ENCODE measurements at regions of chr4 and their contacts with region 1.

Region 1: GRCh38 chr4:112099701-112100297 is 45.5 kb upstream of the FAM241A start:
- DNase-seq: peak in 2 of 9 experiments; percentile 54 to 65
- ATAC-seq: peak; percentile 75
- H3K4me3 ChIP-seq: no peak overlapping the region
- H3K4me3 Mint-ChIP-seq: no peak overlapping the region
- H3K27ac ChIP-seq: no peak overlapping the region
- H3K27ac Mint-ChIP-seq: no peak overlapping the region
- H3K4me1 ChIP-seq: no peaks in the 10 kb centered on the region
- H3K4me1 Mint-ChIP-seq: no peaks in the 10 kb centered on the region
- H3K27me3 ChIP-seq: no peaks in the 10 kb centered on the region
- H3K27me3 Mint-ChIP-seq: peaks cover 2% of the 10 kb centered on the region
- CTCF ChIP-seq: peak; percentile 76

Region 2: DNA sequence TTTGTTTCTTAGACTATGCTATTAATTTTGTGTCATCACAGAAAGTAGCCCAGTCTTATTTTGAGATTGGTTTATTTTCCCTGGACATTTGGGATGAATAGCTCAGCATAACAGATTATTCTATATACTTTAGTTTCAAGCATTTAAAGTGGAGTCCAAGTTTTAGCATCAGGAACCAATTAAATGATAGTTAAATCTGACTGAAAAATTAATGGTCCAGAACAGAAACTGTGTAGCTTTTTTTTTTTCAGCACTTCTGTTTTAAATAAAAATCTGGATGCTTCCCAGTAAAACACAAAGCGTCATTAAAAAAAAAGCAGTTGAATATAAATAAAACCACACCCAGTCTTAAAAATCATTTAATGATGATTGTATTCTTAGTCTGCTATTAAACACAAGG is 1417.5 kb before region 1 on chr4:
- CTCF ChIA-PET with region 1: no interaction called
- POLR2A ChIA-PET with region 1: no interaction called
- intact Hi-C with region 1: no loop called
- DNase-seq: no peak
- ATAC-seq: no peak
- H3K4me3 ChIP-seq: no peak overlapping the region
- H3K4me3 Mint-ChIP-seq: no peak overlapping the region
- H3K27ac ChIP-seq: no peak overlapping the region
- H3K27ac Mint-ChIP-seq: no peak overlapping the region
- H3K4me1 ChIP-seq: no peaks in the 10 kb centered on the region
- H3K4me1 Mint-ChIP-seq: no peaks in the 10 kb centered on the region
- H3K27me3 ChIP-seq: no peaks in the 10 kb centered on the region
- H3K27me3 Mint-ChIP-seq: no peaks in the 10 kb centered on the region
- CTCF ChIP-seq: no peak

Region 3: DNA sequence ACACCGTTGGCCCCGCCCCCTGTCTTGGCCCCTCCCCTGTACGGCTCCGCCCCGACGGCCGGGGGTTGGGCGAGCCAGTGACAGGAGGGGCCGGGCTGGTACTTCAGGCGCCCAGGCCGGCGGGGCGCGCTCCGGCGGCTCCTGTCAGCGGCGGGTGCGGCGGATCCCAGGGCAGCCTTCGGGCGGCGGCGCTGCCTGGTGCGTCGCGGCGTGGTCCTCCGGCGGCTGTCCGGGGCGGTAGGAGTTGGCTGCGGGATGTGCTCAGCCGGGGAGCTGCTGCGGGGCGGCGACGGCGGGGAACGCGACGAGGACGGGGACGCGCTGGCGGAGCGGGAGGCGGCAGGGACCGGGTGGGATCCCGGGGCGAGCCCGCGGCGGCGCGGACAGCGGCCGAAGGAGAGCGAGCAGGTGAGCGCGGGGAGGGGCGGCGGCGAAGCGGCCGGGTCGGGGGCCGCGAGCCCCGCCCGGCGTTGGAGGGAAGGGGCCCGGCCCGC is 45.6 kb after region 1 on chr4 and contains the start of gene FAM241A:
- CTCF ChIA-PET with region 1: interaction called, 4 read pairs
- POLR2A ChIA-PET with region 1: no interaction called
- intact Hi-C with region 1: loop called in 1 of 2 experiments (anchors 2 kb)
- DNase-seq: peak; percentile 84 to 95 (median 90)
- ATAC-seq: peak; percentile 96
- H3K4me3 ChIP-seq: peak within 1 kb of the TSS; percentile 75 to 78
- H3K4me3 Mint-ChIP-seq: peak within 1 kb of the TSS; percentile 98
- H3K27ac ChIP-seq: peak within 1 kb of the TSS; percentile 69
- H3K27ac Mint-ChIP-seq: peak within 1 kb of the TSS; percentile 94
- H3K4me1 ChIP-seq: peaks cover 10% of the 10 kb centered on the region
- H3K4me1 Mint-ChIP-seq: peaks cover 29% of the 10 kb centered on the region
- H3K27me3 ChIP-seq: no peaks in the 10 kb centered on the region
- H3K27me3 Mint-ChIP-seq: no peaks in the 10 kb centered on the region
- CTCF ChIP-seq: no peak
- total RNA-seq, gene FAM241A: 0.67 to 0.90 TPM

Region 4: GRCh38 chr4:112231779-112232713 is 132.2 kb after region 1 on chr4 and contains the start of gene AP1AR:
- CTCF ChIA-PET with region 1: interaction called, 67 read pairs
- POLR2A ChIA-PET with region 1: interaction called, 7 read pairs
- intact Hi-C with region 1: loop called (anchors 1 kb)
- DNase-seq: peak; percentile 54 to 91 (median 77)
- ATAC-seq: peak; percentile 58
- H3K4me3 ChIP-seq: peak within 1 kb of the TSS; percentile 86 to 90
- H3K4me3 Mint-ChIP-seq: peak within 1 kb of the TSS; percentile 97
- H3K27ac ChIP-seq: peak within 1 kb of the TSS; percentile 97
- H3K27ac Mint-ChIP-seq: peak within 1 kb of the TSS; percentile 100
- H3K4me1 ChIP-seq: peaks cover 24% of the 10 kb centered on the region
- H3K4me1 Mint-ChIP-seq: peaks cover 47% of the 10 kb centered on the region
- H3K27me3 ChIP-seq: no peaks in the 10 kb centered on the region
- H3K27me3 Mint-ChIP-seq: peaks cover 1% of the 10 kb centered on the region
- CTCF ChIP-seq: no peak
- total RNA-seq, gene AP1AR: 3.8 to 5.2 TPM

Region 5: GRCh38 chr4:112266821-112267220 is 167.0 kb after region 1 on chr4:
- CTCF ChIA-PET with region 1: interaction called, 5 read pairs
- POLR2A ChIA-PET with region 1: no interaction called
- intact Hi-C with region 1: loop called in 1 of 2 experiments (anchors 1 kb)
- DNase-seq: peak in 2 of 9 experiments; percentile 41 to 52
- ATAC-seq: peak; percentile 36
- H3K4me3 ChIP-seq: no peak overlapping the region
- H3K4me3 Mint-ChIP-seq: no peak overlapping the region
- H3K27ac ChIP-seq: no peak overlapping the region
- H3K27ac Mint-ChIP-seq: no peak overlapping the region
- H3K4me1 ChIP-seq: no peaks in the 10 kb centered on the region
- H3K4me1 Mint-ChIP-seq: no peaks in the 10 kb centered on the region
- H3K27me3 ChIP-seq: no peaks in the 10 kb centered on the region
- H3K27me3 Mint-ChIP-seq: no peaks in the 10 kb centered on the region
- CTCF ChIP-seq: peak; percentile 39

Region 6: GRCh38 chr4:112321776-112322684 is 222.2 kb after region 1 on chr4:
- CTCF ChIA-PET with region 1: interaction called, 9 read pairs
- POLR2A ChIA-PET with region 1: no interaction called
- intact Hi-C with region 1: loop called (anchors 1 to 5 kb)
- DNase-seq: peak; percentile 58 to 85 (median 76)
- ATAC-seq: peak; percentile 99
- H3K4me3 ChIP-seq: no peak overlapping the region
- H3K4me3 Mint-ChIP-seq: no peak overlapping the region
- H3K27ac ChIP-seq: no peak overlapping the region
- H3K27ac Mint-ChIP-seq: no peak overlapping the region
- H3K4me1 ChIP-seq: peaks cover 10% of the 10 kb centered on the region
- H3K4me1 Mint-ChIP-seq: peaks cover 5% of the 10 kb centered on the region
- H3K27me3 ChIP-seq: no peaks in the 10 kb centered on the region
- H3K27me3 Mint-ChIP-seq: no peaks in the 10 kb centered on the region
- CTCF ChIP-seq: peak; percentile 96

Region 7: DNA sequence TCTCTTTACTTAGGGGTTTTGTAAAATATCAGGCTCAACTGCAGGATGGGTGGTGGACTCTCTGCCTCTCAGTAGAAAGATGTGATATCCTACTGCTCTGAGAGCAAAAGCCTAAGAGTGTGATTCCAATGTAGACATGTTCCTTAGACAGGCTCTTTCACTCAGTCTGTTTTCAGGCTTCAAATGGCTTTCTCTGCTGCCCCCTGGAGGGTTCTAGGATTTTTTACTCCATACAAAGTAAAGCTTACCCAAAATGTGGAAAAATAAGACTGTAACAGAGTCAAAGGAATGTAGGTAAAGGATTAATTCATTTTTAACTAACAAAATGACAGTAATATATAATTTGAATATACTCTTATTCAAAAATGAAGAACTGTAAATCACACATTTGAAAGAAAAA is 504.8 kb after region 1 on chr4:
- CTCF ChIA-PET with region 1: interaction called, 18 read pairs
- POLR2A ChIA-PET with region 1: no interaction called
- intact Hi-C with region 1: loop called (anchors 1 to 2 kb)
- DNase-seq: peak in 6 of 9 experiments; percentile 14 to 55 (median 40)
- ATAC-seq: peak; percentile 59
- H3K4me3 ChIP-seq: no peak overlapping the region
- H3K4me3 Mint-ChIP-seq: no peak overlapping the region
- H3K27ac ChIP-seq: no peak overlapping the region
- H3K27ac Mint-ChIP-seq: no peak overlapping the region
- H3K4me1 ChIP-seq: no peaks in the 10 kb centered on the region
- H3K4me1 Mint-ChIP-seq: no peaks in the 10 kb centered on the region
- H3K27me3 ChIP-seq: no peaks in the 10 kb centered on the region
- H3K27me3 Mint-ChIP-seq: no peaks in the 10 kb centered on the region
- CTCF ChIP-seq: peak; percentile 49

Region 8: DNA sequence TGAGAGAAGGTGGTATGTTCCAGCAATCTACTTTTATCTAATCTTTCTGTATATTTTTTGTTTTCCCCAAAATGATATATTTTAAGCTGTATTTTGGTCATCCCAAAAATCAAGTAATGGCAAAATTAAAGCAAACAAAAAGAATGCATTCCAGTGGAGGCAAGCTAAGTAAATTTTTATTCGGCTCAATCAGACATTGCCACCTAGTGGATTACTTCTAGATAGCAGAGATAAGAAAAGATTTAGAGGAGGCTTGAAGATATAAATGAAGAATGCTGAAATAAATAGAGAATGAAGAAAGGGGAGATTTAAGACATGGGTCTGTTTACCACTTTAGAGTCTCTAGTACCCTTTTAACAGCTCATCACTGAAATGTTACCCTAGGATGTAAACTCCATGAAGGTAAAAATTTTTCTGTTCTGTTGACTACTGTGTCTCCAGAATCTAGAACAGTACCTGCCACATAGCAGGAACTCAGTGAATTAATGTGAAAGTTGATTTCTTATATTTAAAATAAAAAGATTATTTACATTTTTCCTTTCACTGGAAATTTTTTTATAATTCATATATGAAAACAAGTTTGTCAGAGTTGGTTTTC is 838.8 kb after region 1 on chr4:
- CTCF ChIA-PET with region 1: interaction called, 3 read pairs
- POLR2A ChIA-PET with region 1: no interaction called
- intact Hi-C with region 1: loop called in 1 of 2 experiments (anchors 10 kb)
- DNase-seq: peak in 2 of 9 experiments; percentile 4 to 12
- ATAC-seq: no peak
- H3K4me3 ChIP-seq: no peak overlapping the region
- H3K4me3 Mint-ChIP-seq: no peak overlapping the region
- H3K27ac ChIP-seq: no peak overlapping the region
- H3K27ac Mint-ChIP-seq: no peak overlapping the region
- H3K4me1 ChIP-seq: no peaks in the 10 kb centered on the region
- H3K4me1 Mint-ChIP-seq: no peaks in the 10 kb centered on the region
- H3K27me3 ChIP-seq: no peaks in the 10 kb centered on the region
- H3K27me3 Mint-ChIP-seq: peaks cover 9% of the 10 kb centered on the region
- CTCF ChIP-seq: peak; percentile 53

Region 9: DNA sequence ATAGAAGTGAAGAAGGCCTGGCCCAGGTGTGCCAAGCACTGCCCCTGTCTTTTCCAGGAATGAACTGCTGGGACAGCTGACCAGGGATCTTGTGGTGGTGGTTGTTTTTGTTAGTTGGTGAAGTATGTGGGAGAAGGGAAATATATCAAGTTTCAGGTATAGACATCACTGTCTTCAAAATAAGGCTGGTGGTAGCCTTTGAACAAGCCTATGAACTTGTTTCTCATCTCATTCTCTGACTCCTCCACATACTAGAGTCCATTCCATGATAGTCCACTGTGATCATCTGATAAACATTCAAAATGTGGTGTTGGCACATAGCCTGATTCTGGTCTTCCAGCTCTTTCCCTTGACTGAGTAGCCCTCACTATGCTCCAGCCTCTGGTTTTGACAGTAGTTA is 1358.1 kb after region 1 on chr4:
- CTCF ChIA-PET with region 1: no interaction called
- POLR2A ChIA-PET with region 1: no interaction called
- intact Hi-C with region 1: no loop called
- DNase-seq: no peak
- ATAC-seq: no peak
- H3K4me3 ChIP-seq: no peak overlapping the region
- H3K4me3 Mint-ChIP-seq: no peak overlapping the region
- H3K27ac ChIP-seq: no peak overlapping the region
- H3K27ac Mint-ChIP-seq: no peak overlapping the region
- H3K4me1 ChIP-seq: no peaks in the 10 kb centered on the region
- H3K4me1 Mint-ChIP-seq: no peaks in the 10 kb centered on the region
- H3K27me3 ChIP-seq: no peaks in the 10 kb centered on the region
- H3K27me3 Mint-ChIP-seq: no peaks in the 10 kb centered on the region
- CTCF ChIP-seq: no peak